Vagina (tissue), 2 donors: ENCODE measurements at regions of chr1 and their contacts with region 1.

Region 1: DNA sequence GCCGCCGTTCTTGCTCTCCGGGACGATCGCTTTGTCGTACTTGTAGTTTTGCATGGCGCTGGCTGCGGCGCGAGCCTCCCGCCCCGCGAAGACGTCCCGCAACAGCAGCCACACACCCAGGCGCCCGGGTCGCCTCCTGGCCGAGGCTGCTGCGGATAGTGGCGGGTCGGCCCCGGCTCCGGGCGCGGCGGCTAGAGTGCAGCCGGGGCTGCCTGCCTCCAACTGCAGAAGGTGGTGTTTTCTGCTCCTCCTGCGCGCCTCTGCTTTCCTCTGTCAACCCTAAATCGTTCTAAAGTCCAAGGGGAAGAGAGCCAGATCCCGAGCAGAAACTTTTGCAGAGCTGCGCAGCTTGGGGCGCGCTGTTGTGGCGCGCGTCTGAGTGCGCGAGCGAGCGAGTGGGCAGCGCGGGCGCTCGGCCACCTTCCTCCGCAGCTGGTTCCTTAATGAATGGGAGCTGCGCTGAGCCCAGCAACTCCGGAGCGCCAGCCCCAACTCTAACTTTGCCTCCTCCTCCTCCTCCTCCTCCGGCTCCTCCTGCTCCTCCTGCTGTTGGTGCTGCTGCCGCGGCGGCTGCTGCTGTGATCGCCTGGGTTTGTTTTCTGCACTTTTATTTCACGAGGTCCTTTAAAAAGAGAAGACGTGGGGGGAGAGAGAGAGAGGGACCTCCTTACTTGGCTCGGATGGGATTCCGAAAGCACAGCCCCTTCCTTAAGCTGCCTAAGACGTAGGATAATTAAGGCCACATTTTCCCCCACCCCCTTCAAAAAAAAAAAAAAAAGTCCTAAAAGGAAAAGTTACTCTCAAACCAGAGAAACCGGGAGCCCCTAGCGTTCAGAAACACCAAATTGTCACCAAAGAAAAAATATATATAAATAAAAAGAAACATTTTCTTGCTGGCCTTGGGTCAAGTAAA is at the start of gene PLPP3:
- DNase-seq: peak in 1 of 2 donors; percentile 96
- H3K4me3 ChIP-seq: peak within 1 kb of the TSS; percentile 79 to 90
- H3K27ac ChIP-seq: peak within 1 kb of the TSS; percentile 97
- H3K4me1 ChIP-seq: peaks cover 20% of the 10 kb centered on the region
- H3K27me3 ChIP-seq: no peaks in the 10 kb centered on the region
- CTCF ChIP-seq: peak; percentile 1 to 47 (median 13)
- POLR2A ChIP-seq: peak in 1 of 2 donors; percentile 94
- total RNA-seq, gene PLPP3: 236 TPM

Region 2: GRCh38 chr1:55378582-55378981 is 1200.6 kb before region 1 on chr1:
- intact Hi-C with region 1: loop called (anchors 2 kb)
- DNase-seq: no peak
- H3K4me3 ChIP-seq: no peak overlapping the region
- H3K27ac ChIP-seq: no peak overlapping the region
- H3K4me1 ChIP-seq: peaks cover 9% of the 10 kb centered on the region
- H3K27me3 ChIP-seq: no peaks in the 10 kb centered on the region
- CTCF ChIP-seq: no peak
- POLR2A ChIP-seq: no peak

Region 3: GRCh38 chr1:55718758-55719671 is 860.2 kb before region 1 on chr1:
- intact Hi-C with region 1: loop called (anchors 2 kb)
- DNase-seq: peak in 1 of 2 donors; percentile 98
- H3K4me3 ChIP-seq: no peak overlapping the region
- H3K27ac ChIP-seq: peak overlapping the region; percentile 82
- H3K4me1 ChIP-seq: peaks cover 28% of the 10 kb centered on the region
- H3K27me3 ChIP-seq: no peaks in the 10 kb centered on the region
- CTCF ChIP-seq: no peak
- POLR2A ChIP-seq: no peak

Region 4: DNA sequence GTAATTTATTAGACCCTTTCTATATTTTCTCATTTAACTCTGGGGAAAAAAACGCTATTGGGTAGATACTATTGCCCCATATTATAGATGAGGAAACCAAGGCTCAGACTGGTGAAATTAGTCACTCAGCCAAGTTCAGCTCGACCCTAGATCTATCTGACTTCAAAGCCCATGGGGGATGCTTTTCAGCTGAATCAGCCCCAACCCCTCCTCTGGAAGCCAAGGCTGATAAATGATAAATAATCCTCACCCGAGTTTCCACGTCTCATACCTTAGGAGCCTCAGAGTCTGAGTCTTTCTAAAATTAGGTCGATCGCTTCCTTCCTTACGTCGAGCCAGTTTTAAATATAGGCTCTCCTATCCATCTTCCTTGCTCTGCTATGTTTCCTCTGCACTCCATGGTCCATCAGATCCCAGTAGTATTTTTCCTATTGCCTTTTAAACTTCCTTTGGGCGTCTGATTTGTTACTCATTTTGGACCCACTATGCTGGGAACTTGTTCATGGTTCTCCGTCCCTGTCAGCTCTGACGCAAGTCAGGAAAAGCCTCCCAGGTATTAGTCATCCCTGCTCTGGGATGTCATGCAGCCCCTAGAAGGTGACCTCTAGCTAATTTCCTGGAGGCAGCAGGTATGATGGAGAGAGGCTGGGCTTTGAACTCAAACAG is 122.7 kb before region 1 on chr1:
- intact Hi-C with region 1: loop called (anchors 10 kb)
- DNase-seq: no peak
- H3K4me3 ChIP-seq: no peak overlapping the region
- H3K27ac ChIP-seq: no peak overlapping the region
- H3K4me1 ChIP-seq: peaks cover 26% of the 10 kb centered on the region
- H3K27me3 ChIP-seq: no peaks in the 10 kb centered on the region
- CTCF ChIP-seq: no peak
- POLR2A ChIP-seq: no peak

Region 5: GRCh38 chr1:56547953-56548352 is 31.3 kb before region 1 on chr1:
- intact Hi-C with region 1: no loop called
- DNase-seq: no peak
- H3K4me3 ChIP-seq: no peak overlapping the region
- H3K27ac ChIP-seq: no peak overlapping the region
- H3K4me1 ChIP-seq: peaks cover 98% of the 10 kb centered on the region
- H3K27me3 ChIP-seq: no peaks in the 10 kb centered on the region
- CTCF ChIP-seq: no peak
- POLR2A ChIP-seq: no peak

Region 6: GRCh38 chr1:56644919-56645676 is 65.9 kb after region 1 on chr1 and contains the start of gene PRKAA2:
- intact Hi-C with region 1: no loop called
- DNase-seq: no peak
- H3K4me3 ChIP-seq: peak within 1 kb of the TSS; percentile 67 to 72
- H3K27ac ChIP-seq: peak within 1 kb of the TSS; percentile 69
- H3K4me1 ChIP-seq: peaks cover 17% of the 10 kb centered on the region
- H3K27me3 ChIP-seq: no peaks in the 10 kb centered on the region
- CTCF ChIP-seq: no peak
- POLR2A ChIP-seq: no peak
- total RNA-seq, gene PRKAA2: 3.7 TPM